ENCODE measurements at regions of chr16 and their contacts with region 1.

Region 1: DNA sequence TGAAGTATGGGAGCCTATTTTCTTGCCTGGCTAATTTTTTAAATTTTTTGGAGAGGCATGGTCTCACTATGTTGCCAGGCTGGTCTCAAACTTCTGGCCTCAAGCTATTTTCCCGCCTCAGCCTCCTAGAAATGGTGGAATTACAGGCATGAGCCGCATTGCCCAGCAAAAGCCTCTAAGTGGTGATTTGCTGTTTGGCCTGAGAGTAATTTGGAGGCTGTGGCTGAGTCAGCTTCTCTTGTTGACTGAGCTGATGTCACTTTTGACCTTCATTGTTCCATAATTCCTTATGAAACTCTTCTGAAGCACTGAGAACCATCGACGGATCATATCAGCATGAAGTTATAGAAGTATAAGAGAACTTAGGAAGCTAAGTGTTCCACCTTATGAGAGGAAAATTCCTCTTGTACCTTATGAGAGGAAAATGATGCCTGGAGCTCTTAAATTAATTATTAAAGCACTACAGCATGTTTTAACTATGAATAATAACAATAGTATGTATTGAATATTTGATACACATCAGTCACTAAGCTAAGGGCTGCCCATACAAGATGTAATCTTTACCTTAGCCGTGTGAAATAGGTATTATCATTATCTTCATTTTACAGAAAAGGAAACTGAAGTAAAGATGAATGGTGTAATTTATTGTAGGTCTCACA is 220.8 kb upstream of the MON1B start:
- DNase-seq: no peak
- H3K4me3 ChIP-seq: no peak overlapping the region
- H3K4me3 Mint-ChIP-seq: no peak overlapping the region
- H3K27ac Mint-ChIP-seq: no peak overlapping the region
- H3K4me1 ChIP-seq: no peaks in the 10 kb centered on the region
- H3K4me1 Mint-ChIP-seq: no peaks in the 10 kb centered on the region
- H3K27me3 ChIP-seq: no peaks in the 10 kb centered on the region
- H3K27me3 Mint-ChIP-seq: peaks cover 5% of the 10 kb centered on the region
- CTCF ChIP-seq: no peak

Region 2: DNA sequence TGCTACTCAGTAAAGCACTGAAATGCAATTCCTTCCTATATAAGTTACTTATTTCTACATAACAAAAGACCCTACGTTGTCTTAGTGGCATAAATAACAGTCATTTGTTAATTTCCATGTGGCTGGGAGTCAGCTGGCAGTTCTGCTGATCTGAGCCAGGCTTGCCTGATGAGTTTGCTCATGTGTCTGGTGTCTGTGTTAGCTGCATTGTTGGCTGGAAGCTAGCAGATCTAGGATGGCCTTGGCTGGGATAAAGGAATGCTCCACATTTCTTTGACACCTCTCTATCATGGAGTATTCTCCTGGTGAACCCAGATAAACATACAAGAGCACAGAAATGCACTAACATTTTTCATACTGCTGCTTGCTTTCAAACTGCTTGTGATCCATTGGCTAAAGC is 43.6 kb before region 1 on chr16:
- CTCF ChIA-PET with region 1: no interaction called
- POLR2A ChIA-PET with region 1: no interaction called
- intact Hi-C with region 1: no loop called
- DNase-seq: no peak
- H3K4me3 ChIP-seq: no peak overlapping the region
- H3K4me3 Mint-ChIP-seq: no peak overlapping the region
- H3K27ac Mint-ChIP-seq: no peak overlapping the region
- H3K4me1 ChIP-seq: peaks cover 5% of the 10 kb centered on the region; the same call in 1 of the 2 replicates
- H3K4me1 Mint-ChIP-seq: no peaks in the 10 kb centered on the region
- H3K27me3 ChIP-seq: no peaks in the 10 kb centered on the region
- H3K27me3 Mint-ChIP-seq: peaks cover 4% of the 10 kb centered on the region
- CTCF ChIP-seq: no peak

Region 3: DNA sequence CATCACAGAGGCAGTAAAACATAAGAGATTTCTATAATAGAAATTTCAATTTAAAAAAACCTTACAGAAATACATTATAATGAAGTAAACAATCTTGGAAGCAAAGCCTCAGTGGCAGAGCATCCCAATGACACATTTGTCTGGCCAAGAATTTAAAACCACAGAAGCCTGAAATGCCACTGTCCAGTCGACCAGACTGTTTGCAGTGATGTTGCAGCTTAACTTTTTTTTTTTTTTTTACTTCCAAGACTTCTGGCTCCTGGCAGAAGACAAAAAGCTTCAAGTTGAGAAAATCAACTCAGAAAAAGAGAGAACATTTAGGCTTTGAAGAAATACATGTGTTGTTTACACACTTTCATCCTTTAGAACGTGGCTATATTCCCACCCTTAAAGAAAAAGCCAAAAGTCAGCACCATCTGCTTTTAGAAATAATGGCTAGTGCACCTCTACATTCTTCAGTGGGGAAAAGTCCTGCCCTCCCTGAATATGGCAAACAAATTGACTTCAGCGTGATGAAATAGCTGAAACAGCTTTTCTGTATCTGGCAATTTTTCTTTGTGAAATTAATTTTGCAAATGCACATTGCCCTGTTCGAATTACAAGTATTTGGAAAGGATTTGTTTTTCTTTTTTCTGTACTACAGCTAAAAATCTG is 15.3 kb after region 1 on chr16:
- CTCF ChIA-PET with region 1: no interaction called
- POLR2A ChIA-PET with region 1: no interaction called
- intact Hi-C with region 1: loop called (anchors 1 kb)
- DNase-seq: no peak
- H3K4me3 ChIP-seq: no peak overlapping the region
- H3K4me3 Mint-ChIP-seq: no peak overlapping the region
- H3K27ac Mint-ChIP-seq: no peak overlapping the region
- H3K4me1 ChIP-seq: no peaks in the 10 kb centered on the region
- H3K4me1 Mint-ChIP-seq: no peaks in the 10 kb centered on the region
- H3K27me3 ChIP-seq: no peaks in the 10 kb centered on the region
- H3K27me3 Mint-ChIP-seq: peaks cover 19% of the 10 kb centered on the region
- CTCF ChIP-seq: no peak

Region 4: GRCh38 chr16:77171745-77172635 is 201.8 kb after region 1 on chr16:
- CTCF ChIA-PET with region 1: no interaction called
- POLR2A ChIA-PET with region 1: no interaction called
- intact Hi-C with region 1: no loop called
- DNase-seq: peak in 1 of 2 experiments; percentile 73
- H3K4me3 ChIP-seq: no peak overlapping the region
- H3K4me3 Mint-ChIP-seq: no peak overlapping the region
- H3K27ac Mint-ChIP-seq: no peak overlapping the region
- H3K4me1 ChIP-seq: no peaks in the 10 kb centered on the region
- H3K4me1 Mint-ChIP-seq: no peaks in the 10 kb centered on the region
- H3K27me3 ChIP-seq: no peaks in the 10 kb centered on the region
- H3K27me3 Mint-ChIP-seq: peaks cover 22% of the 10 kb centered on the region
- CTCF ChIP-seq: peak; percentile 72 to 79